CD8-positive, alpha-beta T cell (primary cell): ENCODE measurements at regions of chr13 and their contacts with region 1.

Region 1: GRCh38 chr13:23579072-23579895 is 9.1 kb downstream of the TNFRSF19 start:
- DNase-seq: peak; percentile 86 to 95 (median 92)
- ATAC-seq: peak; percentile 96
- H3K4me3 ChIP-seq: peak overlapping the region; percentile 60 to 76
- H3K4me3 Mint-ChIP-seq: peak overlapping the region; percentile 66
- H3K27ac ChIP-seq: peak overlapping the region; percentile 44 to 56
- H3K27ac Mint-ChIP-seq: no peak overlapping the region
- H3K4me1 ChIP-seq: peaks cover 10% of the 10 kb centered on the region
- H3K4me1 Mint-ChIP-seq: peaks cover 18% of the 10 kb centered on the region
- H3K27me3 ChIP-seq: peaks cover 8 to 15% of the 10 kb centered on the region in 2 experiments
- H3K27me3 Mint-ChIP-seq: peaks cover 44% of the 10 kb centered on the region
- CTCF ChIP-seq: no peak

Region 2: DNA sequence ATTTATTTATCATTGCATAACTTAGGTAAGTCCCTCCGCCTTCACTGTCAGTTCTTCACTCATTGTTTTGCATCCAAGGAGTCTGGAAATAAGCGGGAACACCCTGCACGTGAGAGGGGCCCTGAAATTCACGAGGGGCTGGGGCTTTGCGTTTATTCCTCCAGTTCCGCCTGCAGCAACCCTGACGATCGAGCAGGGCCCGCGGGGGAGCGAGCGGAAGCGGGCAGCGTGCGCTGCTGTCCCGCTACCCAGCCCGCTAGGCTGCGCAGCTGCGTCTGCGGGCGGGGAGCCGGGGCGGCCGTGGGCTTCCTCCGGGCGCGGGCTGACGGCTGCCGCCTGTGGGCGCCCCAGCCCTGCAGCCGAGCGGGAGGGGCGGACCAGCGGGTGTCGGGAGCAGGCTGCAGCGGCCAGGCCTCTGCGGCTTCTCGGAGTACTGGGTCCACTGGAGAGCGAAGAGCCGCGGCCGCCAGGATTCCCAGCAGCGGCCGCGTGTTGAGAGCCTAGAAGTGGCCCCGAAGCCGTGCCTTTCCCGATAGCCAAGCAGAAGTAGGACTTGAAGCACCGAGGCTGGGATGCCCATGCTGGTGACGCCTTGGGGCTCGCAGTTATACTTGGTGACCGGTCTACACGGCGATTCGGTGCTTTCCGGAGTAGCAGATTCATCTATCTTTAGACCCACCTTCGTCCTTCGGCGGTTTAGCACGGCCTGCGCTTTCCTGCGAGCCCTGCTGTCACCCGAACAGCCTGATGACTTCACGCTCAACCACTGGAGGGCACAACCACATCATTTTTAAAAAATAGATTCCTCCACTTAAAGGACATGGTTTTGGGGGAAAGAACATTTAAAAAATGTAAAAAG is 112.9 kb before region 1 on chr13:
- CTCF ChIA-PET with region 1: no interaction called
- POLR2A ChIA-PET with region 1: no interaction called
- intact Hi-C with region 1: loop called (anchors 2 kb)
- DNase-seq: peak; percentile 26 to 77 (median 55)
- ATAC-seq: peak; percentile 85
- H3K4me3 ChIP-seq: peak overlapping the region; percentile 49 to 53
- H3K4me3 Mint-ChIP-seq: peak overlapping the region; percentile 82
- H3K27ac ChIP-seq: no peak overlapping the region
- H3K27ac Mint-ChIP-seq: peak overlapping the region; percentile 11
- H3K4me1 ChIP-seq: no peaks in the 10 kb centered on the region
- H3K4me1 Mint-ChIP-seq: peaks cover 5% of the 10 kb centered on the region
- H3K27me3 ChIP-seq: no peaks in the 10 kb centered on the region
- H3K27me3 Mint-ChIP-seq: peaks cover 13% of the 10 kb centered on the region
- CTCF ChIP-seq: peak; percentile 42

Region 3: GRCh38 chr13:23771552-23771951 is 192.3 kb after region 1 on chr13:
- CTCF ChIA-PET with region 1: no interaction called
- POLR2A ChIA-PET with region 1: no interaction called
- intact Hi-C with region 1: no loop called
- DNase-seq: no peak
- ATAC-seq: no peak
- H3K4me3 ChIP-seq: no peak overlapping the region
- H3K4me3 Mint-ChIP-seq: no peak overlapping the region
- H3K27ac ChIP-seq: no peak overlapping the region
- H3K27ac Mint-ChIP-seq: no peak overlapping the region
- H3K4me1 ChIP-seq: no peaks in the 10 kb centered on the region
- H3K4me1 Mint-ChIP-seq: no peaks in the 10 kb centered on the region
- H3K27me3 ChIP-seq: no peaks in the 10 kb centered on the region
- H3K27me3 Mint-ChIP-seq: no peaks in the 10 kb centered on the region
- CTCF ChIP-seq: no peak

Region 4: DNA sequence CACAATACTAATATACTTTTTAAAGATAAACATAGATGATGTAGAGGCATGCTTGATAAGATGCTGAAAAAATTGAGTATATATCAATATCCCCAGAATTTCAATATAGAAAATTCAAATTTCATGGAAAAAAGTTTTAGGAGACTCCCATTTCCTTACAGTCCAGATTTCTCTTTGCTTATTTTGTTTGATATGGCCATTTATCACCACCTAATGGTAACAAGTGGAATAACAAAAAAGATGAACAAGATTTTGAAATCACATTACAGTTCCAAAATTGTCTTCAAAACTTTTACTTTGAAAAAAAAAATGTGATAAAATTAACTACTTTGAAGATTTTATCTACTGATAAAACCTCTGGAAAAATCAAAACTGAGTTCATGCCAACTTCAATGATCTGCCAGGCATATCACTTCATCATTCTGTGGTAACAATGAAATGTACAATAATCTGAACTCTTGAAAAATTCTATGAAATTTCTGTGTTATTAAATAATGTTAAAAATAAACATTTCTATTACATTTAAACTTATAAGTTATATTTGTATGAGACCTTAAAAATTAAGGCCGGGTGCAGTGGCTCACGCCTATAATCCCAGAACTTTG is 292.4 kb after region 1 on chr13:
- CTCF ChIA-PET with region 1: no interaction called
- POLR2A ChIA-PET with region 1: no interaction called
- intact Hi-C with region 1: loop called in 1 of 2 experiments (anchors 1 kb)
- DNase-seq: peak in 2 of 9 experiments; percentile 13 to 37
- ATAC-seq: no peak
- H3K4me3 ChIP-seq: no peak overlapping the region
- H3K4me3 Mint-ChIP-seq: no peak overlapping the region
- H3K27ac ChIP-seq: no peak overlapping the region
- H3K27ac Mint-ChIP-seq: no peak overlapping the region
- H3K4me1 ChIP-seq: no peaks in the 10 kb centered on the region
- H3K4me1 Mint-ChIP-seq: no peaks in the 10 kb centered on the region
- H3K27me3 ChIP-seq: no peaks in the 10 kb centered on the region
- H3K27me3 Mint-ChIP-seq: no peaks in the 10 kb centered on the region
- CTCF ChIP-seq: peak; percentile 73

Region 5: GRCh38 chr13:23966691-23967615 is 387.7 kb after region 1 on chr13:
- CTCF ChIA-PET with region 1: no interaction called
- POLR2A ChIA-PET with region 1: no interaction called
- intact Hi-C with region 1: loop called (anchors 5 to 10 kb)
- DNase-seq: peak in 3 of 9 experiments; percentile 23 to 70 (median 56)
- ATAC-seq: peak; percentile 73
- H3K4me3 ChIP-seq: peak overlapping the region; percentile 40 to 57
- H3K4me3 Mint-ChIP-seq: peak overlapping the region; percentile 82
- H3K27ac ChIP-seq: peak overlapping the region; percentile 38 to 89
- H3K27ac Mint-ChIP-seq: peak overlapping the region; percentile 84
- H3K4me1 ChIP-seq: peaks cover 8% of the 10 kb centered on the region
- H3K4me1 Mint-ChIP-seq: peaks cover 15% of the 10 kb centered on the region
- H3K27me3 ChIP-seq: no peaks in the 10 kb centered on the region
- H3K27me3 Mint-ChIP-seq: no peaks in the 10 kb centered on the region
- CTCF ChIP-seq: no peak

Region 6: DNA sequence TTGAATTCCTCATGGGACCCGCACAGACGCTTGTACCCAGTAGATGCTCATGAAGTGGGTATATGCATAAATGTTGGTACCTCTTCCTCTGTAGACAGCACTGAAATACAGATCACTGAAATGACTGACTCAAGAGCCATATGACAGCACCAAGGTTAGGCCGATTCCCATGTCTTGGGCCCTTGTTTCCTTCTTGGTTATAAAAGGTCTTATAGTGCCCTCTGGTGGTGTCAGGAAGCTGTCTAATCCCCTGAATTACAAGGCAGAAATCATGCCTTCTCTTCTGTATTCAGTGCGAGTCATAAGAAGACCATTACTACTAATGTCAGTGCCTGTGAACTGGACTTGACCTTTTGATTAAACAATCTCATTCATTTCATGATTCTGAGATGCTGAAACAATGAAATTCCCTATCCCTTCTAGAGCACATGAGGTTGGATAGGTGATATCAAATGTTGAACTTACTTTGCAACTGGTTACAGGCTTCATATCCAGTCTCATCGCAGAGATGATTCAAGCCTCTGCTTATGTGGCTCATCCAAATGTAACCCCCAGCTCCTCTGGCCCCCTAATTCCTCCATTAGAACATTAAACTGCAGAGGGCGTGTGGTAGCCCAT is 640.9 kb after region 1 on chr13:
- CTCF ChIA-PET with region 1: no interaction called
- POLR2A ChIA-PET with region 1: no interaction called
- intact Hi-C with region 1: loop called in 1 of 2 experiments (anchors 10 kb)
- DNase-seq: peak in 6 of 9 experiments; percentile 41 to 86 (median 54)
- ATAC-seq: peak; percentile 82
- H3K4me3 ChIP-seq: no peak overlapping the region
- H3K4me3 Mint-ChIP-seq: no peak overlapping the region
- H3K27ac ChIP-seq: no peak overlapping the region
- H3K27ac Mint-ChIP-seq: no peak overlapping the region
- H3K4me1 ChIP-seq: peaks cover 19% of the 10 kb centered on the region
- H3K4me1 Mint-ChIP-seq: peaks cover 49% of the 10 kb centered on the region
- H3K27me3 ChIP-seq: no peaks in the 10 kb centered on the region
- H3K27me3 Mint-ChIP-seq: no peaks in the 10 kb centered on the region
- CTCF ChIP-seq: peak; percentile 74

Region 7: GRCh38 chr13:25286969-25287961 is 1708.0 kb after region 1 on chr13 and contains the start of gene MTMR6:
- CTCF ChIA-PET with region 1: no interaction called
- POLR2A ChIA-PET with region 1: no interaction called
- intact Hi-C with region 1: loop called in 1 of 2 experiments (anchors 5 kb)
- DNase-seq: peak; percentile 90 to 98 (median 94)
- ATAC-seq: peak; percentile 81
- H3K4me3 ChIP-seq: peak within 1 kb of the TSS; percentile 83 to 95
- H3K4me3 Mint-ChIP-seq: peak within 1 kb of the TSS; percentile 98
- H3K27ac ChIP-seq: peak within 1 kb of the TSS; percentile 94 to 97
- H3K27ac Mint-ChIP-seq: peak within 1 kb of the TSS; percentile 99
- H3K4me1 ChIP-seq: peaks cover 23% of the 10 kb centered on the region
- H3K4me1 Mint-ChIP-seq: peaks cover 41% of the 10 kb centered on the region
- H3K27me3 ChIP-seq: peaks cover 0 to 2% of the 10 kb centered on the region in 2 experiments
- H3K27me3 Mint-ChIP-seq: peaks cover 10% of the 10 kb centered on the region
- CTCF ChIP-seq: peak; percentile 99
- total RNA-seq, gene MTMR6: 41.9 to 44.4 TPM